Head of caudate nucleus (tissue), 42 donors: ENCODE measurements at regions of chr14 and their contacts with region 1.

Region 1: GRCh38 chr14:77862154-77862786 is 62.4 kb downstream of the ADCK1 start:
- DNase-seq: peak; percentile 42 to 97 (median 88)

Region 2: DNA sequence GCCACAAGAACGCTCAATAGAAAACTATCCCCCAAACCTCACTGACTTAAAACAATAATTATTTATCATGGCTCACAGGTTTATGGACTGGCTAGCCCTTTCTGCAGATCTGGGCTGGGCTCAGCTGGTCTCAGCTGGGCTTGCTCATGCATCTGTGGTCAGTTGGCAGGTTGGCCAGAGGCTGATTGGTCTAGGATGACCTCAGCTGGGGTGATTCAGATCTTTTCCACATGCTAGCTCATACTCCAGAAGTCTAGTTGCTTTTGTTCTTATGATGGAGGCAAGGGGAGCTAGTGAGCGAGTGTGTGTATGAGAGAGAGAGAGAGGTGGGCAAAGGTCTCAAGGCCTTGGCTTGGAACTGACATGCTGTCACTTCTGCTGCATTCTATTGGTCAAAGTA is 126.7 kb after region 1 on chr14:
- intact Hi-C with region 1: loop called (anchors 5 kb)
- DNase-seq: peak; percentile 51 to 95 (median 87)

Region 3: DNA sequence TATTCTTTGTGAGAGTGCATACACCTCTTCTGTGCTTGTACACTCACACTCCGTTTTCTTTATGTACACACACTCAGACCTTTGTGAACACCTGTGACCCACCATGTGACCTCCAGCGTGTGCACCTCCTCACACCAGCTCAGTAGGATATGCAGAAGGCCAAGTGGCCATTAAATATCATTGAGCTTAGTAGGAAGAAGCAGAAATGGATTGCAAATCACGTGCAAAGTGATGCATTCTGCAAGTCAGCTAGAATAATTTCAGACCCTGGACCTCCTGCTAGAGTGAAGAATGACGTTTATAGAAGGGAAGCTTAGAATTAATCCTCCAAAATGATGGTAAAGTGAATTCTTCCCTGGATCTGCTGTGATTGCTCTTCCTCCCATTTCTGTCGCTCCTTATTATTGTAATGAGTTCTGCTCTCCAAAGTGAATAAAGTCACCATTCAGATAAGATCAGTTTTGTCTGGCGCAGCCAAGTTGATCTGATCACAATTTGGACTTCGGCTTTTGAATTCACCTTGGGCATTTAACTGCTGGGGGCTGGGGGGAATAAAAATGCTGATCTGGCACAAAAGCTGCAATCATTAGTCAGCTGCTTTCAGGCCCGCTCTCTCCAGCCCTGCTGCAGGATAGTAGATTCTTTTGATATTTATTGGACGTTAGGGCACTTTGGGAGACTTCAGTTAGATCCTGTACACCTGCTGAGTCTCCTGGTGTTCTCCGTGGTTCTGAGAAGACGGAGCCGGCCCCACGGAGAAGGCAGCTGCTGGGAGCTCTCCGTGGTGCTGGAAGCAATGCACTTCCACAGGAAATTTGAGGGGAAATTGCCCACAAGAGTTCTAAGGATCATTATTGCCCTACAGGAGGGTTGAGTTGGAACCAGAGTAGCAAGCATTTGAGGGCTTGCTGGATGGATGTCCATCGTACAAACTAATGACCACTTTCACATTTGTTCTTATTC is 295.5 kb after region 1 on chr14:
- intact Hi-C with region 1: loop called (anchors 10 kb)
- DNase-seq: peak in 5 of 42 donors; percentile 23 to 65 (median 36)

Region 4: GRCh38 chr14:78598041-78598920 is 736.0 kb after region 1 on chr14:
- intact Hi-C with region 1: loop called (anchors 10 kb)
- DNase-seq: peak; percentile 47 to 86 (median 69)